Psoas muscle (tissue), 8 donors: ENCODE measurements at regions of chr19 and their contacts with region 1.

Region 1: GRCh38 chr19:2494444-2495129 is 18.7 kb downstream of the GADD45B start:
- DNase-seq: peak; percentile 83 to 88
- ATAC-seq: peak; percentile 31 to 64 (median 44)
- H3K4me3 ChIP-seq: peak overlapping the region; percentile 55
- H3K27ac ChIP-seq: peak overlapping the region; percentile 92
- H3K4me1 ChIP-seq: peaks cover 35% of the 10 kb centered on the region
- H3K27me3 ChIP-seq: no peaks in the 10 kb centered on the region
- CTCF ChIP-seq: no peak

Region 2: DNA sequence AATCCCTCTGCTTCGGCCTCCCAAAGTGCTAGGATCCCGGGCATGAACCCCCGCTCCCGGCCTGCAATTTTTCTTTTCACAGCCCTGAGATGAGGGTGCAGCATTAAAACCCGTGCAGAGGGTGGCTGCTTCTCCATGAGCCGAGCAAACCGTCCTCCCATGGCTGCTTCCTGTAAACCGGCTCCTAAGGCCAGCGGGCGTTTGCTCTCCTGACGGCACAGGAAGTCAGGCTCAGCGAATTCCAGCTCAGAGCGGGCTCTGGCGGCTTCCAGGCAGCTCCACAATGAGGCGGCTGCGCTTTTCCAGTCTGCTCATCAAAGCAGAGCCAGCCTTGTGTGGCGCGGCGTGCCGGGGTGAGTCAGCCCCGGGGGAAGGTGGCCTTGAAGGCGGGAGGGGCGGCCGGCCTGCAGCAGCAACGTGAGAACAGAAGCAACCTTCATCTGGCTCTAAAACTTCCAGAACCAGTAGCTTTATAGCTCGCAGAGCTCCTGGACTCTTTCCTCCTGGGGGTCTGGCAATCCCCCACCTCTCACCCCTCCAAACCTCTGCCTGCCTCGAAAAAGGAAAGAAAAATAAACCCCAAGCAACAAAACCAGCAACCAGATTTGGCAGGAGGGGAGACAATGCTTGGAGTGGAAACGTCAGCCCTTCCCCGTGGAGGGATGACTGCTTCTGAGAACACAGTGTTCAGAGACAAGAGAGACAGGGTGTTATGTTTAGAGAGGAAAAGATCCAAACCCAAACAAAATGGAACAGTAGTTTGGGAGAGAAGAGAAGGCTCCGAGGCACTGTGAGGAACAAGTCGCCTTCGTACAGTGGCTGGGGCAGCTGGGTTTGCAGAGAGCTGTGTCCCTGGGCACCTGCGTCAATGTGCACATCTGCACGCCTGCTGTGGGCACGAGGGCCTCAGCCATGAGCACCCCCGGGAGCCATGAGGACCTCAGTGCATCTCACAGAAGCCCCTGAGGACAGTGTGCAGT is 49.2 kb after region 1 on chr19:
- intact Hi-C with region 1: loop called (anchors 5 kb)
- DNase-seq: peak; percentile 97
- ATAC-seq: peak; percentile 76 to 84 (median 81)
- H3K4me3 ChIP-seq: peak overlapping the region; percentile 26
- H3K27ac ChIP-seq: peak overlapping the region; percentile 90
- H3K4me1 ChIP-seq: peaks cover 63% of the 10 kb centered on the region
- H3K27me3 ChIP-seq: no peaks in the 10 kb centered on the region
- CTCF ChIP-seq: peak; percentile 26

Region 3: GRCh38 chr19:2610637-2611482 is 116.3 kb after region 1 on chr19:
- intact Hi-C with region 1: no loop called
- DNase-seq: peak; percentile 93 to 96
- ATAC-seq: peak; percentile 91 to 99 (median 97)
- H3K4me3 ChIP-seq: peak overlapping the region; percentile 67
- H3K27ac ChIP-seq: peak overlapping the region; percentile 76
- H3K4me1 ChIP-seq: no peaks in the 10 kb centered on the region
- H3K27me3 ChIP-seq: no peaks in the 10 kb centered on the region
- CTCF ChIP-seq: peak; percentile 98